WTC11 (cell line): ENCODE measurements at regions of chr1 and their contacts with region 1.

Region 1: DNA sequence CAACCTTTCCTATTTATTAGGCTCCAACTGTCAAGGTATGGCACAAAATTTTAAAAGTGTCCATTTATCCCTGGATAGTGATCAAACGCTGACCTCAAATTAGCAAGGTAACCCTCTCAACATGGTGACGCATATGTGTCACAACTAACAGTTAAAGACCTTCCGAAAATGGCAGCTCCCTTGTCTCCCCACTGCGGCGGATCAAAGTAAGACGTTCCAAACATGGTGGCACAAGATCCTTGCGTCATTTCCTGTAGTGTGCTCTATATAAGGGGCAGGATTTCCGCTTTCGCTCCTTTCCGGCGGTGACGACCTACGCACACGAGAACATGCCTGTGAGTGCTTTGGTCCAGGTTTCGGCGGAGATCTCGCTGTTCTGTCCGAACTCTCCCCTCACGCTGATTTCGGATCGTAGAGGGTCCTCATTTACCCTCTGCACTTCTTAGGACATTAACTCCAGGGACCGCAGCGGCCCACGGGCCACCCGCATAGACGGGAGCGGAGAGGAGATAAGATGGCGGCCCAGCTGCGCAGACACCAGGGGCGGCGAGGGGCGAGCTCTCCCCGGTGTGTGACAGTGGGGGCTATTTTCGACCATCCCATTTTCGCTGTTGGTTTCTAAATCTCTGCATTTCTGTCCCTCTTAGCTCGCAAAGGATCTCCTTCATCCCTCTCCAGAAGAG is at the start of gene RPS27:
- DNase-seq: peak; percentile 83
- ATAC-seq: peak; percentile 38
- H3K4me3 Mint-ChIP-seq: peak within 1 kb of the TSS; percentile 97
- H3K27ac Mint-ChIP-seq: peak within 1 kb of the TSS; percentile 98
- H3K4me1 Mint-ChIP-seq: peaks cover 29% of the 10 kb centered on the region
- H3K27me3 Mint-ChIP-seq: no peaks in the 10 kb centered on the region
- CTCF ChIP-seq: no peak
- total RNA-seq, gene RPS27: 2,141 to 2,438 TPM (median 2,292 TPM) in 3 replicates

Region 2: GRCh38 chr1:153677718-153678505 is 312.7 kb before region 1 on chr1:
- CTCF ChIA-PET with region 1: interaction called, 11 read pairs
- POLR2A ChIA-PET with region 1: interaction called, 3 read pairs
- DNase-seq: peak; percentile 78
- ATAC-seq: peak; percentile 63
- H3K4me3 Mint-ChIP-seq: peak overlapping the region; percentile 87
- H3K27ac Mint-ChIP-seq: no peak overlapping the region
- H3K4me1 Mint-ChIP-seq: peaks cover 18% of the 10 kb centered on the region
- H3K27me3 Mint-ChIP-seq: peaks cover 24% of the 10 kb centered on the region
- CTCF ChIP-seq: peak; percentile 82

Region 3: GRCh38 chr1:153790966-153791647 is 199.5 kb before region 1 on chr1:
- CTCF ChIA-PET with region 1: interaction called, 51 read pairs
- POLR2A ChIA-PET with region 1: interaction called, 3 read pairs
- DNase-seq: no peak
- ATAC-seq: no peak
- H3K4me3 Mint-ChIP-seq: no peak overlapping the region
- H3K27ac Mint-ChIP-seq: no peak overlapping the region
- H3K4me1 Mint-ChIP-seq: peaks cover 24% of the 10 kb centered on the region
- H3K27me3 Mint-ChIP-seq: no peaks in the 10 kb centered on the region; the same call in 1 of the 2 replicates
- CTCF ChIP-seq: no peak

Region 4: GRCh38 chr1:153796791-153797659 is 193.6 kb before region 1 on chr1:
- CTCF ChIA-PET with region 1: interaction called, 51 read pairs
- POLR2A ChIA-PET with region 1: interaction called, 3 read pairs
- DNase-seq: peak; percentile 91
- ATAC-seq: peak; percentile 60
- H3K4me3 Mint-ChIP-seq: no peak overlapping the region
- H3K27ac Mint-ChIP-seq: peak overlapping the region; percentile 54
- H3K4me1 Mint-ChIP-seq: peaks cover 25% of the 10 kb centered on the region
- H3K27me3 Mint-ChIP-seq: no peaks in the 10 kb centered on the region; the same call in 1 of the 2 replicates
- CTCF ChIP-seq: peak; percentile 95

Region 5: DNA sequence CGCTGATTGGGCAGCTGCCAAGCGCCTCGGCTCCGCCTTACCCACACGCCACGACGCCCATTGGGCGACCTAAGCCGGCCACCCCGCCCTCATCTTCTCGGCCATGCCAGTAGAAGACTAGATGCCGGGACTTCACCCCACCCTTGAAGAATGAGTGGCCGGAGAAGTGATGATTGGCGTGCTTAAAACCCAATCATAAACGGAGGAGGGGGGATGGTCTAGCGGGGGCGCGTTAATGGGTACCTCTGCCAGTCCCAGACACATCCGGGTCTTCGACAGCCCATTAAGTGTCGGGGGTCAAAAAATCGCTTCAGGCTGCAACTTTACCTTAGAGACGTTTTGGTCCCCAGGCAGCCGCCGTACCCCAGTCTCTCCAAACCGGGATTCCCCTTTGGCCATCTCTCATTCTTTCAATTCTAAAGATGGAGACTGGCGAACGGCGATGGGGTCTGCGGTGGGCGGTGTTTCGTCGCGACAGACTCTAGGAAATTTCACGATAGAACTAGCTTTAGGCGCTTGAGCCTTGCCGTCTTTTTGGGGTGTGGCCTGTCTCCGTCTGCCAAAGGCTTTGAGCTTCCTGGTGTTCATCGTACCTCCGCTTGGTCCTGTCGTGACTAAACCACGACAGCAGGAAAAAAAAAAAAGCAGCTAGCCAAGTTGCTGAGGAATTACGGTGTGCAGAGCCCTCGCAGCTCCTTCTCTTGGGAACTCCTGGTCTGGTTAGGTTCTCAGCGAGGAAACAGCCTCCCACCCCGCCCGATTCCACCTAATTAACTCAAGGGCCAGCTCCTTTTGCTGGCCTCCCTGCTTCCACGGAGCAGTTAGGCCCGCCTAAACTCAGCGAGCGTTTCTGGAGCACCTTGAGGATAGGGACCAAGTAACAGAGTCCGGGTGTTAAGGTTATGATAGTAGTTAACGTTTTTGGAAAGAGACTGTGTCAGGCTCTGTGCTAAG is 67.4 kb before region 1 on chr1 and contains the start of gene GATAD2B:
- CTCF ChIA-PET with region 1: interaction called, 20 read pairs
- POLR2A ChIA-PET with region 1: interaction called, 8 read pairs
- DNase-seq: peak; percentile 99
- ATAC-seq: peak; percentile 97
- H3K4me3 Mint-ChIP-seq: peak within 1 kb of the TSS; percentile 96
- H3K27ac Mint-ChIP-seq: peak within 1 kb of the TSS; percentile 96
- H3K4me1 Mint-ChIP-seq: peaks cover 26% of the 10 kb centered on the region
- H3K27me3 Mint-ChIP-seq: no peaks in the 10 kb centered on the region
- CTCF ChIP-seq: no peak
- total RNA-seq, gene GATAD2B: 42.1 to 46.9 TPM (median 44.5 TPM) in 3 replicates

Region 6: DNA sequence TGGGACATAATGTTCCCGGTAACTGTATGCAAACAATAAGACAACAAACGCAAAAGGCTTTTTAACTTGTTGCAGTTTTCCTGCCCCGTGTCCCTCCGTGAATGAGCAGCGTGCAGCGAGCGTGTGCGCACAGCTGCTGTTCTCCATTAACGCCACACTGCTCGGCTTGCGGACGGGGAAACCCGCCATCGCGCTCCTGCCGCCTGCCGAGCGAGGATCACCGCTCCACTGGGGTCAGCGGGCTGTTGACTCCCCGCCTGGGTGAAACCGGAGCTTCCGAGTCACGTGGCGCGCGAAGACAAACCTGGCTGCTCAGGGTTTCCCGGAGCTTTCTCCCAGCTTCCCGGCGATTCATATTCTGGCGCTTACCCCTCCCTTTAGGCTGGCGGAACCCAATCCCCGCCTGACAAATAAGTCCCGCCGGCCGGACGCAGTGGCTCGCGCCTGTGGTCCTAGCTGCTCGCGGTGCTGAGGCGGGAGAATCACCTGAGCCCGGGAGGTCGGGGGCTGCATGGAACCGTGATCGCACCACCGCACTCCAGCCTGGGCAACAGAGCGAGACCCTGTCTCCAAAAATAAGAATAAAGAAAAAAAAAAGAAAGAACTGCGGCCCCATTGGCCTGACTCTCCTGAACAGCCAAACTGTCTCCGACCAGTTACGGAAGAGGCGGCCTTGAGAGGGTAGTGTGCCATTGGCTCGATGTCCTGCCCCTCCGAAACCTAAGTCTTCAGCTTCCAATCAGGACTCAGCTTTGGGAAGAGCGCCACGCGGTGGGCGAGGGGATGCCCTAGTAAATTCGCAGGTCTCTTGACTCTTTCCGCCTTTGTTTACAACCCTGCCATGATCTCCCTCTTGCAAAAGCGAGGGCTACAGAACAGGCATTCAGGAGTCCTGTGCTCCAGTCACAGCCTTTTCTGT is 23.3 kb before region 1 on chr1 and contains the start of gene CREB3L4:
- CTCF ChIA-PET with region 1: interaction called, 28 read pairs
- POLR2A ChIA-PET with region 1: interaction called, 31 read pairs
- DNase-seq: peak; percentile 92
- ATAC-seq: peak; percentile 79
- H3K4me3 Mint-ChIP-seq: peak within 1 kb of the TSS; percentile 80
- H3K27ac Mint-ChIP-seq: peak within 1 kb of the TSS; percentile 98
- H3K4me1 Mint-ChIP-seq: peaks cover 31% of the 10 kb centered on the region
- H3K27me3 Mint-ChIP-seq: no peaks in the 10 kb centered on the region
- CTCF ChIP-seq: no peak
- total RNA-seq, gene CREB3L4: 33.1 to 35.2 TPM (median 34.6 TPM) in 3 replicates

Region 7: DNA sequence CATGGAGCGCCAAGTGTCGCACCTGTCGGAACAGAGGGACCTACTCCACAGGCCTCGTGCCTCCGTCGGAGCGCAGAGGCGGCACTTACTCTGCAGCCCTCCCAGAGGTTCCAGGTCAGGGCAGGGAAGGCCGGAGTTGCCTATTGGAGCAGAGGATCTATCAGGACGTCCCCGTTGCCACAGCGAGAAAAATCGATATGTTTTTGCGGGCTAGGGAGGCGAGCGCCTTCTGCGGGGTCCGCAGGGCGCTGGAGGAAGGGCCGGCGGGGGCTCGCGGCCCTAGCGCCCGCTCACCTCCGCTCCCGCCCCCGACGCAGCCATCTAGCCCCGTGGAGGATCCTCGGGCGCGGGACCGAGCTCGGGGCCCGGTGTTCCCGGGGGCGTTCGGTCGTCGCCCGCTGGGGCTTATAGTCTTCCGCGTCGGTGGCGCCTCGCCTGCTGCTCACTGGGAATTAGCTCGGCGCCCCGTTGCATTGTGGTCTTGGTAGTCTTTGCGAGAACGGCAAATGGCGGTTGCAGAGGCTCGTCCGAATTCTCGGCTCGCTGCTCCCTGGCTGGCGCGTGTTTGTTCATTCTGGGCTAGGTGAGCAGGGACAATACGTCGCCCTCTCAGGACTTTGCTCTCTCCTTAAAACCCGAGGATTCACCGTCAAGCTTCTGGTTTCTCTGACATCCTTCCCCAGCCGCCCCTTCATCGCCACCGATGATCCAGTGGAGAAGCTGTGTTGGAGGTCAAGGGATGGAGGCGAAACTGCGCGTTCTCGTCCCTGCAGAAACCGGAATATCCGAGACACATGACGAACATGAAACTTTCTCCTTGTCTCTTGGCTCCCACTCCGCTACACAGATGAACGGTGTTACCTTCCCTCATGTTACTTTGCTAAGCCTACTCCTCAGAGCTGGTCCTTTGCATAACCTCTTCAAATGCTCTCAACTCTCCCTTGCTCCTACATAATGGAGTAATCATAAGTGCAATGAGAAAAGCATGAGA is 13.1 kb before region 1 on chr1 and contains the start of gene JTB:
- CTCF ChIA-PET with region 1: interaction called, 18 read pairs
- POLR2A ChIA-PET with region 1: interaction called, 19 read pairs
- DNase-seq: peak; percentile 88
- ATAC-seq: peak; percentile 87
- H3K4me3 Mint-ChIP-seq: peak within 1 kb of the TSS; percentile 98
- H3K27ac Mint-ChIP-seq: peak within 1 kb of the TSS; percentile 97
- H3K4me1 Mint-ChIP-seq: peaks cover 31% of the 10 kb centered on the region
- H3K27me3 Mint-ChIP-seq: no peaks in the 10 kb centered on the region
- CTCF ChIP-seq: no peak
- total RNA-seq, gene JTB: 88.8 to 90.6 TPM (median 90.3 TPM) in 3 replicates

Region 8: DNA sequence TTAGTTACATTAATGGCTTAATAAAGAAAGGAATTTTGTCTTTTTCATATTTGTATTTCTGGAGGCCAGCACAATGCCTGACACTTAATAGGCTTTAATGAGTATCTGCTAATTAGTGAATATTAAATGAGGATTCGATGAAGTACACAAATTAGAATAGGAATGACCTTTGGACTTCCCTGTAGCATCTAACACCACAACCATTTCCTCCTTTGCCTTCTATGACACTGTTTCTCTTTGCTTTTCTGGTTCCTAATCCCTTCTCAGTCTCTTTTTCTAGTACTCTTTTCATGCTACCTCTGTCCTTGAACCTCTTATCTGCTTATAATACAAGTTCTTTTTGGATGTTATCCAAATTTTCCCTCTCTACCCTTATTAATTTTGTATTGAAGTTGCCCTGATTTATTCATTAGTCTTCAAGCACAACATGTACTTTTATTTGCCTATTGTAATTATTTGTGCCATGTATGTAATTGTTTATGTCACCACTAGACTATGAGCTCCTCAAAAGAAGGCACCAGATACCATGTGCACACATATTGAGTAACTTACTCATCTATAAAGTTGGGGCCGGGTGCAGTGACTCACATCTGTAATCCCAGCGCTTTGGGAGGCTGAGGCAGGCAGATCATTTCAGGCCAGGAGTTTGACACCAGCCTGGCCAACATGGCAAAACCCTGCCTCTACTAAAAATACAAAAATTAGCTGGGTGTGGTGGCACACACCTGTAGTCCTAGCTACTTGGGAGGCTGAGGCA is 23.7 kb after region 1 on chr1:
- CTCF ChIA-PET with region 1: no interaction called
- POLR2A ChIA-PET with region 1: no interaction called
- DNase-seq: no peak
- ATAC-seq: no peak
- H3K4me3 Mint-ChIP-seq: no peak overlapping the region
- H3K27ac Mint-ChIP-seq: no peak overlapping the region
- H3K4me1 Mint-ChIP-seq: no peaks in the 10 kb centered on the region
- H3K27me3 Mint-ChIP-seq: no peaks in the 10 kb centered on the region
- CTCF ChIP-seq: no peak

Region 9: GRCh38 chr1:154062309-154062708 is 71.7 kb after region 1 on chr1:
- CTCF ChIA-PET with region 1: no interaction called
- POLR2A ChIA-PET with region 1: no interaction called
- DNase-seq: no peak
- ATAC-seq: no peak
- H3K4me3 Mint-ChIP-seq: no peak overlapping the region
- H3K27ac Mint-ChIP-seq: no peak overlapping the region
- H3K4me1 Mint-ChIP-seq: no peaks in the 10 kb centered on the region
- H3K27me3 Mint-ChIP-seq: peaks cover 5% of the 10 kb centered on the region
- CTCF ChIP-seq: no peak

Region 10: DNA sequence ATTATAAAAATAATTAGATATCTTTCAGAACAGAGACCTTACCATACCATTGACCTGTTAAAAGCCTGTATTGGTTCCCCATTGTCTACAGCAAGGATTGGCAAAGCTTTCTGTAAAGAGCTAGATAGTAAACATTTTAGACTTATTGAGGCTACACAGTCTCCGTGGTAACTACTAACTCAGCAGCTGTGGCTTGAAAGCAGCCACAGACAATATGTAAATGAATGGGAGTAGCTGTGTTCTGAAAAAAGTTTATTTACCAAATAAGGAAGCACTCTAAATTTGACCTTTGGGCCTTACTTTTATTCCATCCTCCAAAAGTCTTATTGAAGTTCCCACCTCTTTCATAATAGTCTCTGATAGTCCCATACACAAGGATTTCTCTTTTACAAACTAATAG is 124.6 kb after region 1 on chr1:
- CTCF ChIA-PET with region 1: no interaction called
- POLR2A ChIA-PET with region 1: no interaction called
- DNase-seq: no peak
- ATAC-seq: no peak
- H3K4me3 Mint-ChIP-seq: no peak overlapping the region
- H3K27ac Mint-ChIP-seq: no peak overlapping the region
- H3K4me1 Mint-ChIP-seq: no peaks in the 10 kb centered on the region
- H3K27me3 Mint-ChIP-seq: no peaks in the 10 kb centered on the region; the same call in 1 of the 2 replicates
- CTCF ChIP-seq: no peak